HCT116 (cell line): ENCODE measurements at regions of chr11 and their contacts with region 1.

Region 1: GRCh38 chr11:124837491-124837856 is 27.8 kb upstream of the ROBO3 start:
- DNase-seq: peak; percentile 72
- ATAC-seq: peak; percentile 84
- H3K4me3 ChIP-seq: no peak overlapping the region
- H3K27ac ChIP-seq: no peak overlapping the region
- H3K4me1 ChIP-seq: peaks cover 2 to 4% of the 10 kb centered on the region in 2 experiments; a peak in 3 of 4 replicates
- H3K27me3 ChIP-seq: 0 out of 2 replicates have a peak, but pooled peaks cover 13% of the 10 kb centered on the region
- CTCF ChIP-seq: peak; percentile 56 to 72 (median 72)
- POLR2A ChIP-seq: no peak
- RAD21 ChIP-seq: peak; percentile 77

Region 2: GRCh38 chr11:124415356-124415923 is 422.0 kb before region 1 on chr11:
- CTCF ChIA-PET with region 1: interaction called, 11 read pairs
- POLR2A ChIA-PET with region 1: no interaction called
- RAD21 ChIA-PET with region 1: no interaction called
- intact Hi-C with region 1: loop called (anchors 10 kb)
- DNase-seq: peak; percentile 46
- ATAC-seq: no peak
- H3K4me3 ChIP-seq: no peak overlapping the region
- H3K27ac ChIP-seq: no peak overlapping the region
- H3K4me1 ChIP-seq: no peaks in the 10 kb centered on the region
- H3K27me3 ChIP-seq: peaks cover 57% of the 10 kb centered on the region
- CTCF ChIP-seq: peak; percentile 60 to 64 (median 63)
- POLR2A ChIP-seq: no peak
- RAD21 ChIP-seq: peak; percentile 74

Region 3: DNA sequence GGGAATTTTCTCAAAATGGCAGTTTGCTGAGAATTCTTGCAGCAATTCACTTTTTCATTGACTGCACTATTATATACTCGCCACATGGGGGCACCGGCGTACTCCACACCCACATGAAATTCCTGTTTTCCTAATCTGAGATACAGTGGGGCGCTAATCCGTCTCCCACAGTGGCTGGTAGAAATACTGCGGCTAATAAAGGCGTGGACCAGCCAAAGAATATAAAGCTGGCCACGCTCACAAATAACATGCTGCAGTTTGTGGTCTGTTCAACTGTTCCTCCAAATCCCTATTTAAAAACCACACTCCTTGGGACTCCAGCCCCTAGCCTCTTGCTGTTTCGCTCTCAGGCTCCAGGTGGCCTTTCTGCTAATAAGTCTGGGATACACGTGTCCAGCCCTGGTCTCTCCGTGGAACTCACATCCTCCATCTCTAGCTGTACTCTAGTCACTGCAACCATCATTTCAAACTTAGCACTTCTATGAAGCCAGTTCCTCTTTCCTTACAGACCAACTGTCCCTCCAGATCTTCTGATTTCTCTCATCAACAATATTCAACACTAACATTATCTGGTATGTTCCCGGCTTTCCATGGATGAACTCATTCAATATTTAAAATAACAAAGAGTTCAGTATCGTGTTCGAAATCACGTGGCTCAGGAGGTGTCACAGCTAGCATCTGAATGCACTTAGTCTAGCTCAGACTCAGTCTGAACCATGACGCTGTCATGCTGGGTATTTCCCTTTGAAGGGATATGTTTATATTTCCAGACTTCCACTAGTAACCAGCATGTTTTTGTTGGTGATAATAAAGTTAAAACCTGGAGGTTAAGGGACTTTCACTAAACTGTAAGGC is 192.8 kb before region 1 on chr11:
- CTCF ChIA-PET with region 1: interaction called, 6 read pairs
- POLR2A ChIA-PET with region 1: no interaction called
- RAD21 ChIA-PET with region 1: interaction called in 1 of 2 experiments, 3 read pairs
- intact Hi-C with region 1: loop called (anchors 1 kb)
- DNase-seq: peak; percentile 50
- ATAC-seq: peak; percentile 91
- H3K4me3 ChIP-seq: peak overlapping the region in 1 of 2 experiments; percentile 34; a peak in 2 of 4 replicates
- H3K27ac ChIP-seq: no peak overlapping the region
- H3K4me1 ChIP-seq: peaks cover 0 to 7% of the 10 kb centered on the region in 2 experiments; a peak in 2 of 4 replicates
- H3K27me3 ChIP-seq: no peaks in the 10 kb centered on the region
- CTCF ChIP-seq: peak; percentile 65 to 97 (median 90)
- POLR2A ChIP-seq: no peak
- RAD21 ChIP-seq: peak; percentile 89

Region 4: GRCh38 chr11:124669193-124669592 is 168.3 kb before region 1 on chr11:
- CTCF ChIA-PET with region 1: interaction called, 19 read pairs
- POLR2A ChIA-PET with region 1: no interaction called
- RAD21 ChIA-PET with region 1: no interaction called
- intact Hi-C with region 1: loop called (anchors 1 kb)
- DNase-seq: peak; percentile 28
- ATAC-seq: peak; percentile 46
- H3K4me3 ChIP-seq: no peak overlapping the region
- H3K27ac ChIP-seq: no peak overlapping the region
- H3K4me1 ChIP-seq: peaks cover 0 to 12% of the 10 kb centered on the region in 2 experiments; a peak in 2 of 4 replicates
- H3K27me3 ChIP-seq: no peaks in the 10 kb centered on the region
- CTCF ChIP-seq: peak; percentile 40 to 87 (median 67)
- POLR2A ChIP-seq: no peak
- RAD21 ChIP-seq: peak; percentile 94

Region 5: GRCh38 chr11:124758317-124759203 is 78.9 kb before region 1 on chr11:
- CTCF ChIA-PET with region 1: interaction called, 7 read pairs
- POLR2A ChIA-PET with region 1: no interaction called
- RAD21 ChIA-PET with region 1: no interaction called
- intact Hi-C with region 1: loop called (anchors 1 kb)
- DNase-seq: peak; percentile 59
- ATAC-seq: peak; percentile 79
- H3K4me3 ChIP-seq: peak overlapping the region; percentile 5 to 28; a peak in 3 of 4 replicates
- H3K27ac ChIP-seq: no peak overlapping the region
- H3K4me1 ChIP-seq: peaks cover 14 to 36% of the 10 kb centered on the region in 2 experiments
- H3K27me3 ChIP-seq: no peaks in the 10 kb centered on the region
- CTCF ChIP-seq: peak; percentile 64 to 72 (median 72); a peak in 5 of 6 replicates
- POLR2A ChIP-seq: no peak
- RAD21 ChIP-seq: peak; percentile 61

Region 6: GRCh38 chr11:124793466-124794278 is 43.8 kb before region 1 on chr11:
- CTCF ChIA-PET with region 1: interaction called, 4 read pairs
- POLR2A ChIA-PET with region 1: no interaction called
- RAD21 ChIA-PET with region 1: no interaction called
- intact Hi-C with region 1: loop called (anchors 2 kb)
- DNase-seq: peak; percentile 43
- ATAC-seq: peak; percentile 93
- H3K4me3 ChIP-seq: no peak overlapping the region
- H3K27ac ChIP-seq: no peak overlapping the region
- H3K4me1 ChIP-seq: peaks cover 3 to 14% of the 10 kb centered on the region in 2 experiments; a peak in 3 of 4 replicates
- H3K27me3 ChIP-seq: no peaks in the 10 kb centered on the region
- CTCF ChIP-seq: peak; percentile 69 to 87 (median 73); a peak in 5 of 6 replicates
- POLR2A ChIP-seq: no peak
- RAD21 ChIP-seq: peak; percentile 77